ENCODE measurements at regions of chr5 and their contacts with region 1.

Region 1: DNA sequence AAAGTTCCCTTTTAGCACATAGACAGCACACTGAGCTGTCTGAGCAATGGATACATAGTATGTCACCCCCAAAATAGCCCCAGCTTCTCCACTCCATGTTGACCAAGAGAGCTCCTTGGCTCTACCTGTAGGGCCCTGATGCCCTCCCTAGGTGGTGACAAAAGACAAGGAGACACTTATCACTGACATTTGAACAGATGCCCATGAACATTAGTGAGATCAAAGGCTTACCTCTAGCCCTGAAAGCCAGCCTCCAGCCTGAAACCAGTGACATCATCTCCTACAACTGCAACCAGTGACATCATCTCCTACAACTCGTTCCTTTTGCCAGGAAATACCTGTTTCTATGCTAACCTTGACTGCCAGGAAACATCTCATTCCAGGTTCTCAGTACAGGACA is 122.7 kb downstream of the FSTL4 start:
- DNase-seq: peak; percentile 74
- H3K4me3 Mint-ChIP-seq: no peak overlapping the region
- H3K27ac Mint-ChIP-seq: no peak overlapping the region
- H3K4me1 Mint-ChIP-seq: peaks cover 9% of the 10 kb centered on the region
- H3K27me3 Mint-ChIP-seq: no peaks in the 10 kb centered on the region

Region 2: DNA sequence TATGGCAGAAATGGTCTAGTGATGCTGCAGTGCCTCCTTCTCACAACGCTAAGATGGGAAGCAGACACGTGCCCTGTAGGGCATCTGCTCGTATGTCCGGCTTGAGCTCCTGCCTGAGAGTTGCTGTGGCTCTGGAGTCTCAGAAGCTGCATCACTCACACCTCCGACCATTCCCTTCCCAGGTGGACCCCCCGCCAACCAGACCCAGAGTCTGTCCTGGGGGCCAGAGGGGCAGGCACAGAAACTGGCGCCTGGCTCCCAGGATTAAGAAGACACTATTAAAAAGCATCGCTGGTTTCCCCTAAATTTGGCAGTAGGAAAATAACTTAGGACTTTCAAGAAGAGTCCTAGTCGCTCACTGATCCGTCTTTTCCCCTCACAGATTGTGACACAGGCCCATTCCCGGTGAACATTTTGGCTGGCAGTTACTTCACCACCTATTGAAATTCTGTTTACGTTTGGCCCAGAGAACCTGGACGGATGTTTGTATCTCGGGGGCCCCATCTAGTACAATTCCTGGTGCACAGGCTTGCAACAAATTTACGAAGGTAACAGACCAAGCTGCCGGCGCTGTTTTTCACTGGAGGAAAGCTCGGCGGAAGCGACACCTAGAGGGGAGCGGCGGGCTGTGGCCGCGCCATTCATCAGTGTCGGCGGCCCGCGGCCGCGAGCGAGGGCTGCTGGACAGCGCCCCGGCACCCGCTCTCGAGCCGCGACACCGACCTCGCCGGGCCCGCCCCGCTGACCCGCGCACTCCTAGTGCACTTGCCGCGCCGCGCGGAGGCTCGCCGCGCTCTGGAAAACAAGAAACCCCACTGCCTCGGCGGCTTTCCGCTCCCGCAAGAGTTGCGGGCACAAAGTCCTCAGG is 121.1 kb after region 1 on chr5:
- CTCF ChIA-PET with region 1: no interaction called
- intact Hi-C with region 1: loop called (anchors 1 kb)
- DNase-seq: peak; percentile 69
- H3K4me3 Mint-ChIP-seq: peak overlapping the region; percentile 51
- H3K27ac Mint-ChIP-seq: no peak overlapping the region
- H3K4me1 Mint-ChIP-seq: peaks cover 12% of the 10 kb centered on the region
- H3K27me3 Mint-ChIP-seq: peaks cover 52% of the 10 kb centered on the region

Region 3: DNA sequence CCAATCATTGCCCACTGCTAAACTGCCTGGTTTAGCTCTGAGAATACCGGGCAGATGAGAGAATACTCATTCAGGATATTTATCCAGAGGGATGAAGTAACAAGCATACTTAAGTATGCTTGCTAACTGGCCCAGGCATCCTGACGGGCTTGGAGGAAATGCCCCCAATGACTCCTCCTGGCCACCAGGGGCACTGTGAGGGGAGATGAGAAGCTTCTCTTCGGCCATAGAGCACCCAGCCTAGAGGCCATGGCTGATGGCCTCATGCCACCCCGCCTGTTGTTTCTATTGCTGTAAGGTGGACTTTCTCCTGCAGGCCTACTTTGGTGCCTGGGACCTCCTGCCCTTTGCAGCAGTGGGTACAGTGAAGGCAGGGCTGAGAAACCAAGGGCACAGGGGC is 257.2 kb after region 1 on chr5:
- CTCF ChIA-PET with region 1: no interaction called
- intact Hi-C with region 1: loop called (anchors 5 kb)
- DNase-seq: peak; percentile 47
- H3K4me3 Mint-ChIP-seq: no peak overlapping the region
- H3K27ac Mint-ChIP-seq: no peak overlapping the region
- H3K4me1 Mint-ChIP-seq: no peaks in the 10 kb centered on the region
- H3K27me3 Mint-ChIP-seq: peaks cover 5% of the 10 kb centered on the region

Region 4: DNA sequence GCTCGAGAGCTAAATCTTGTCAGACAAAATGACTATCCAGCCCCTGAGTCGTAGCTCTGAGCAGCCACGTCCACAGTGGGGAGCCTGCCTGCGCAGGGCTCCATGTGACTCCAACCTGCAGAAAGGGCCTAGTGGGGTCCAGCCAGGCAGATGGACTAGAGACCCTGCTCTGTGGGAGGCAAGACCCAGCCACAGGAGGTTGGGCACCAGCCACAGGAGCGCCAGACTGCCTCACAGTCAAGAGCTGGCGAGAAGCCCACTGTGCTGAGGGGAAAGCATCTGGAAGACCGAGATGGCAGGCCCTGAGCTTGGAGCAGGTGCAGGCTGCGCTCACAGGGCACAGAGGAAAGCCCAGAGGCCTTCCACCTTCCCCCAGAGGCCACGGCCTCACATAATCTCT is 417.4 kb after region 1 on chr5:
- CTCF ChIA-PET with region 1: no interaction called
- intact Hi-C with region 1: no loop called
- DNase-seq: no peak
- H3K4me3 Mint-ChIP-seq: no peak overlapping the region
- H3K27ac Mint-ChIP-seq: no peak overlapping the region
- H3K4me1 Mint-ChIP-seq: no peaks in the 10 kb centered on the region
- H3K27me3 Mint-ChIP-seq: no peaks in the 10 kb centered on the region

Region 5: GRCh38 chr5:133968049-133968980 is 478.7 kb after region 1 on chr5 and contains the start of gene C5orf15:
- CTCF ChIA-PET with region 1: no interaction called
- intact Hi-C with region 1: loop called (anchors 1 kb)
- DNase-seq: peak; percentile 96
- H3K4me3 Mint-ChIP-seq: peak within 1 kb of the TSS; percentile 96
- H3K27ac Mint-ChIP-seq: peak within 1 kb of the TSS; percentile 93
- H3K4me1 Mint-ChIP-seq: peaks cover 46% of the 10 kb centered on the region
- H3K27me3 Mint-ChIP-seq: no peaks in the 10 kb centered on the region
- total RNA-seq, gene C5orf15: 18.1 to 18.6 TPM

Region 6: DNA sequence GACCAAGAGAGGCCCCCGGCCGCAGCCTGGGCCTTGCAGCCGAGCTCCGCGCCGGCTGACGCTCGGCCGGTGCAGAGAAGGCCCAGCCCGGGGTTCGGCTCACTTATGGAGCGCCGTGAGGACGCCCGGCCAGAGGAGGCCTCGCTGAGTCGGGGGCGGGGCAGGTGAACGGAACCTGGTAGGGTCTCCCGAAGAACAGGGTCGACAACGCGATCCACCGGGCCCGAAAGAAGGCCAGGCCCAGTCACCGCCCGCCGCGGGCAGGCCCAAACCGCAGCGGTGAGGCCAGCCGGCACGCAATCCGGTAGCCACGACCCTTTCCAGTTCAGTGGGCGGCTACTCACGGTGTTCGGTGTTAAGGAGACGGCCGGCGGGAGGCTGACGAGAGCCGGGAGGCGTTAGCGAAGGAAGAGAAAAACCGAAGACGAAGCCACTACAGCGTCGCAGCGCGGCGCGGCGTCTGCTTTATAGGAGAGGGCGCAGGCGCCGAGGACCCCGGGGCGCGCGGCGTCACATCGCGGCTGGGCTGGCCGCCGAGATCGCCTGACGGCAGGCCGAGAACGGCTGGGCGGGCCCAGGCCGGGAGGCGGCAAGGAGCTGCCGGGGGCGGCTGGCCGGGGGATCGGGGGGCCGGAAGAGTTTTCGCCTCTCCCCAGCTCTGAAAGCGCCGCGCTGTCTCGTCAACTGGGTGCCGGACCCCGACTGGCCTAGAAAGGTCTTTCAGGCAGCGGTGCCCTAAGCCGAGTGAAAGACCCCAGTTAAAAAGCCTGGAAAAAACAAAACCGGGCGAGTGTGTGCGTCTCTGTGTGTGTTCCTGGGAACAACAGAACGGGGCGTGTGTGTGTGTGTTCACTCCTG is 687.1 kb after region 1 on chr5 and contains the start of gene SKP1:
- CTCF ChIA-PET with region 1: no interaction called
- intact Hi-C with region 1: loop called (anchors 2 kb)
- DNase-seq: peak; percentile 83
- H3K4me3 Mint-ChIP-seq: peak within 1 kb of the TSS; percentile 96
- H3K27ac Mint-ChIP-seq: peak within 1 kb of the TSS; percentile 94
- H3K4me1 Mint-ChIP-seq: peaks cover 31% of the 10 kb centered on the region
- H3K27me3 Mint-ChIP-seq: no peaks in the 10 kb centered on the region
- total RNA-seq, gene SKP1: 307 to 309 TPM

Measured in activated naive CD4-positive, alpha-beta T cell treated with anti-CD3 and anti-CD28 coated beads for 36 hours (primary cell).